T-cell (primary cell): ENCODE measurements at regions of chr6 and their contacts with region 1.

Region 1: GRCh38 chr6:41424370-41425058 is 89.1 kb downstream of the NCR2 start:
- DNase-seq: peak; percentile 34 to 85 (median 72)
- ATAC-seq: peak; percentile 58 to 66 (median 62)
- H3K4me3 ChIP-seq: no peak overlapping the region
- H3K4me3 Mint-ChIP-seq: no peak overlapping the region
- H3K27ac ChIP-seq: no peak overlapping the region
- H3K27ac Mint-ChIP-seq: no peak overlapping the region
- H3K4me1 ChIP-seq: peaks cover 16 to 35% of the 10 kb centered on the region in 2 experiments
- H3K4me1 Mint-ChIP-seq: peaks cover 8 to 9% (median 8%) of the 10 kb centered on the region in 3 donors
- H3K27me3 ChIP-seq: peaks cover 8 to 37% of the 10 kb centered on the region in 2 experiments
- H3K27me3 Mint-ChIP-seq: peaks cover 26 to 29% of the 10 kb centered on the region in 2 donors

Region 2: DNA sequence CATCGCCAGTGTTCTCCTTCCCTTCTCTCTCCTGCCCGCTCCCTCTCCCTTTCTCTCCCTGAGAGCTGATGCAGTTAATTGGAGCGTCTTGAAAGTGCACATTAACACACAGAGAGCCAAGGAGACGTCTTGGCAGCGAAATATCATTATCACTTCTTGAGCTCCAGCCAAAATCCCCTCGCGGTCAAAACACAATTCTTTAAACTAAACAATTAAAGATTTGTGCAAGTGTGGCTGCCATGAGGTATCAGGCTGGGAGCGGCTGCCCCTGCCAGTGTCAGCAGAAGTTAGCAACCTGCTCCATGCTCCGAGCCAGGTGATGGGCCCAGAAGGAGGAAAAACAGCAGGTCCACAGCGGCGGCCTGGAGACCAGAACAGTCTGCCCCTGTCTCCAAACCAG is 20.7 kb after region 1 on chr6:
- CTCF ChIA-PET with region 1: interaction called in 1 of 2 experiments, 3 read pairs
- POLR2A ChIA-PET with region 1: interaction called in 1 of 2 experiments, 14 read pairs
- DNase-seq: no peak
- ATAC-seq: no peak
- H3K4me3 ChIP-seq: no peak overlapping the region
- H3K4me3 Mint-ChIP-seq: no peak overlapping the region
- H3K27ac ChIP-seq: no peak overlapping the region
- H3K27ac Mint-ChIP-seq: peak overlapping the region in 1 of 2 donors; percentile 27
- H3K4me1 ChIP-seq: peaks cover 22 to 41% of the 10 kb centered on the region in 2 experiments
- H3K4me1 Mint-ChIP-seq: peaks cover 29 to 36% (median 34%) of the 10 kb centered on the region in 3 donors
- H3K27me3 ChIP-seq: peaks cover 0 to 44% of the 10 kb centered on the region in 2 experiments
- H3K27me3 Mint-ChIP-seq: peaks cover 4 to 22% of the 10 kb centered on the region in 2 donors

Region 3: GRCh38 chr6:41618091-41618490 is 193.6 kb after region 1 on chr6:
- CTCF ChIA-PET with region 1: no interaction called
- POLR2A ChIA-PET with region 1: no interaction called
- DNase-seq: no peak
- ATAC-seq: no peak
- H3K4me3 ChIP-seq: no peak overlapping the region
- H3K4me3 Mint-ChIP-seq: no peak overlapping the region
- H3K27ac ChIP-seq: no peak overlapping the region
- H3K27ac Mint-ChIP-seq: no peak overlapping the region
- H3K4me1 ChIP-seq: no peaks in the 10 kb centered on the region
- H3K4me1 Mint-ChIP-seq: no peaks in the 10 kb centered on the region
- H3K27me3 ChIP-seq: peaks cover 0 to 19% of the 10 kb centered on the region in 2 experiments
- H3K27me3 Mint-ChIP-seq: peaks cover 5 to 12% of the 10 kb centered on the region in 2 donors

Region 4: GRCh38 chr6:42017021-42017643 is 592.6 kb after region 1 on chr6:
- CTCF ChIA-PET with region 1: no interaction called
- POLR2A ChIA-PET with region 1: interaction called in 1 of 2 experiments, 11 read pairs
- DNase-seq: peak in 2 of 35 experiments; percentile 28
- ATAC-seq: peak; percentile 17 to 49 (median 44)
- H3K4me3 ChIP-seq: no peak overlapping the region
- H3K4me3 Mint-ChIP-seq: peak overlapping the region in 2 of 3 donors; percentile 0 to 47
- H3K27ac ChIP-seq: peak overlapping the region; percentile 3
- H3K27ac Mint-ChIP-seq: peak overlapping the region; percentile 84 to 87
- H3K4me1 ChIP-seq: peaks cover 25 to 60% of the 10 kb centered on the region in 2 experiments
- H3K4me1 Mint-ChIP-seq: peaks cover 71 to 74% (median 74%) of the 10 kb centered on the region in 3 donors
- H3K27me3 ChIP-seq: no peaks in the 10 kb centered on the region
- H3K27me3 Mint-ChIP-seq: no peaks in the 10 kb centered on the region